GM12878 (cell line): ENCODE measurements at regions of chr2 and their contacts with region 1.

Region 1: DNA sequence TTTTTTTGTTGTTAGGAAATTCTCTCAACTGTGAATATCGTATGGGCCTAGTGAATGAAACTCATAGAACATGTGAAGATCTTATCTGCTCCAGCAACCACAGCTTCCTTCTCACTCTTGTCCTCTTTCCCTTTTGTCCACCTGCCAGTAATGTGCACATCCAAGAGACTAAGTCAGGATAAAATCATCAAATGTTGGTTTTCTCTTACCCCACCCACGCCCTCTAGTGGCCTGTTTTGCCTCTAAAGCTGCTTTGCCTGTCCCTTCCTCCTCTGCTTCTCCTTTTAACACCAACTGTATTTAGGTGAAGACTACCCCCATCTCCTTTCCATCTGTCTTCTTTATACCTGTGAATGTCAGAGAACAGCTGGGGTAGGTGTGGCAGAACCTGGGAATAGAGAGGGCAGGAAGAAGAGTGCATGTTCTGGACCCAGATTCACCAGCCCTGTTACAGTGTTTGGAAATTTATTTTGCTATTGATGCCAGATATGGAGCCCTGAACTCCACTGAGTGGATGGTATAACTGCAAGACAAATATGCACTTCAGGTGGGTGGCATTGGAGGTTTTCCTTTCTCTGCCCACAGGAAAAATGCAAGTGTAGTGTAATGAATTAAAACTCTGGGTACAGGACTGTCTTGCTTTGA is 8.4 kb upstream of the MGAT5 start:
- DNase-seq: no peak
- ATAC-seq: peak; percentile 65
- H3K4me3 ChIP-seq: no peak overlapping the region; the same call in 1 of the 2 replicates
- H3K27ac ChIP-seq: peak overlapping the region; percentile 54
- H3K4me1 ChIP-seq: peaks cover 66% of the 10 kb centered on the region
- H3K27me3 ChIP-seq: no peaks in the 10 kb centered on the region
- CTCF ChIP-seq: peak; percentile 78 to 86 (median 80)
- EP300 ChIP-seq: no peak
- POLR2A ChIP-seq: no peak
- RAD21 ChIP-seq: peak; percentile 75

Region 2: DNA sequence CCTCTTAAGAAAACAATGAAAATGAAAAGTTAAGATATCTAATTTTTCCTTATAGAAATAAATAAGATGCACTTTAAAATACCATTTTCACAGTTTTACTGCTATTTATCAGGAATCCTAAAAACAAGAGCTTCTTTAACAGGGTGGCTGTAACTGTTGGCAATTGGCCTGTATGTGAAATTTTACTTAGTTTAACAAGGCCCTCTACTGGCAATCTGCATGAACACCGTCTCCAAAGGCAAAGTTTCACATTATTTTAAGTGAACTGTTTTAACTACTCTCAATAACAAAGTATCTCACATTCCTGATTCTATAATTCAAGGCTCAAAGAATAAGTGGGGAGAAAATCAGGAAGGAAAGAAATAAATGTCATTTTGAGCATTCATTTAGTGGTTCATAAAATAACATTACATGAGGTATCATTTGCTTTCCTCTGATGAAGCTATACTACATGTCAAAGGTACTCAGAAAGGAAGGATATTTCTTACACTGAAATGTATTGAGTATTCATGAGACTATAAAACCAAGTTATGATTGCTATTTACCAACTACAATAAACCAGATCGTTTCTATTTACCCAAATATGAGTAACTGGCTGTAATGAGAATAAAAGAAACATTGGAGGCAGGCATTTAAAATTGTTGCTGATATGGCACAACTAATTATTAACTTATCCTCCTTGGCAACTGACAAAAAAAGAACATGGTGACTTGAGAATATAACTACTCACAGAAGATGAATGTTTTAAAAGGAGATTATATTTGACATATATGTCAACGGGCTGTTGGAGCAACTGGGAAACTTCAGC is 684.2 kb before region 1 on chr2:
- CTCF ChIA-PET with region 1: no interaction called
- POLR2A ChIA-PET with region 1: no interaction called
- RAD21 ChIA-PET with region 1: no interaction called
- SMC1A ChIA-PET with region 1: no interaction called
- in situ Hi-C with region 1: no loop called
- intact Hi-C with region 1: no loop called
- DNase-seq: no peak
- ATAC-seq: peak; percentile 80
- H3K4me3 ChIP-seq: no peak overlapping the region
- H3K27ac ChIP-seq: no peak overlapping the region
- H3K4me1 ChIP-seq: no peaks in the 10 kb centered on the region
- H3K27me3 ChIP-seq: no peaks in the 10 kb centered on the region; a peak in 1 of 4 replicates
- CTCF ChIP-seq: peak; percentile 58 to 65 (median 59); a peak in 5 of 6 replicates
- EP300 ChIP-seq: no peak
- POLR2A ChIP-seq: no peak
- RAD21 ChIP-seq: peak; percentile 50

Region 3: GRCh38 chr2:133886735-133887660 is 358.5 kb before region 1 on chr2:
- CTCF ChIA-PET with region 1: interaction called, 30 read pairs
- POLR2A ChIA-PET with region 1: no interaction called
- RAD21 ChIA-PET with region 1: interaction called, 7 read pairs
- SMC1A ChIA-PET with region 1: interaction called, 10 read pairs
- in situ Hi-C with region 1: no loop called
- intact Hi-C with region 1: loop called (anchors 10 kb)
- DNase-seq: peak; percentile 21
- ATAC-seq: peak; percentile 94
- H3K4me3 ChIP-seq: no peak overlapping the region
- H3K27ac ChIP-seq: no peak overlapping the region
- H3K4me1 ChIP-seq: no peaks in the 10 kb centered on the region
- H3K27me3 ChIP-seq: no peaks in the 10 kb centered on the region; a peak in 2 of 4 replicates
- CTCF ChIP-seq: peak; percentile 57 to 76 (median 70); a peak in 5 of 6 replicates
- EP300 ChIP-seq: no peak
- POLR2A ChIP-seq: no peak
- RAD21 ChIP-seq: peak; percentile 84

Region 4: DNA sequence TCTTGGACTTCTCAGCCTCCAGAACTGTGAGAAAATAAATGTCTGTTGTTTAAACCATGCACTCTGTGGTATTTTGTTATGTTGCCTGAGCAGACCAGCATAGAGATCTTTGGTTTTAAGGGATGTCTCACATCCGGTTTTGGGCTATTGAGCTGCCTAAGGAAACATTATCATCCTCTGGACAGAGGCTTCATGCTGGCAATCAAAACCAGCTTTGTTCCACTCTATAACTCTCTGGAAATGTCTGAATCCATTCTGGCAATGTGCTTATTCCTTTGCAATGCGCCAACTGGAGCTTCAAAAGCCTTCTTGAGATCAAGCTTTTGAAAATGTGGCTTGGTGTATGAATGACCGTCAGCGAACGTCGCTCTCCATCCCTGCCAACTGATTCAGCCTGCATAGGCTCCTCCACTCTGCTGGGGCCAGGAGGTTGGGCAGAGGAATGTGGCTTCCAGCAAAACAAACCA is 175.1 kb before region 1 on chr2:
- CTCF ChIA-PET with region 1: no interaction called
- POLR2A ChIA-PET with region 1: no interaction called
- RAD21 ChIA-PET with region 1: no interaction called
- SMC1A ChIA-PET with region 1: no interaction called
- in situ Hi-C with region 1: no loop called
- intact Hi-C with region 1: no loop called
- DNase-seq: no peak
- ATAC-seq: no peak
- H3K4me3 ChIP-seq: no peak overlapping the region
- H3K27ac ChIP-seq: no peak overlapping the region
- H3K4me1 ChIP-seq: no peaks in the 10 kb centered on the region
- H3K27me3 ChIP-seq: no peaks in the 10 kb centered on the region; a peak in 1 of 4 replicates
- CTCF ChIP-seq: no peak
- EP300 ChIP-seq: no peak
- POLR2A ChIP-seq: no peak
- RAD21 ChIP-seq: no peak

Region 5: GRCh38 chr2:134207564-134208209 is 37.8 kb before region 1 on chr2:
- CTCF ChIA-PET with region 1: interaction called, 49 read pairs
- POLR2A ChIA-PET with region 1: no interaction called
- RAD21 ChIA-PET with region 1: interaction called, 8 read pairs
- SMC1A ChIA-PET with region 1: interaction called, 12 read pairs
- in situ Hi-C with region 1: no loop called
- intact Hi-C with region 1: no loop called
- DNase-seq: no peak
- ATAC-seq: peak; percentile 99
- H3K4me3 ChIP-seq: no peak overlapping the region
- H3K27ac ChIP-seq: no peak overlapping the region
- H3K4me1 ChIP-seq: peaks cover 33% of the 10 kb centered on the region
- H3K27me3 ChIP-seq: no peaks in the 10 kb centered on the region
- CTCF ChIP-seq: peak; percentile 75 to 79 (median 78)
- EP300 ChIP-seq: no peak
- POLR2A ChIP-seq: no peak
- RAD21 ChIP-seq: peak; percentile 88

Region 6: DNA sequence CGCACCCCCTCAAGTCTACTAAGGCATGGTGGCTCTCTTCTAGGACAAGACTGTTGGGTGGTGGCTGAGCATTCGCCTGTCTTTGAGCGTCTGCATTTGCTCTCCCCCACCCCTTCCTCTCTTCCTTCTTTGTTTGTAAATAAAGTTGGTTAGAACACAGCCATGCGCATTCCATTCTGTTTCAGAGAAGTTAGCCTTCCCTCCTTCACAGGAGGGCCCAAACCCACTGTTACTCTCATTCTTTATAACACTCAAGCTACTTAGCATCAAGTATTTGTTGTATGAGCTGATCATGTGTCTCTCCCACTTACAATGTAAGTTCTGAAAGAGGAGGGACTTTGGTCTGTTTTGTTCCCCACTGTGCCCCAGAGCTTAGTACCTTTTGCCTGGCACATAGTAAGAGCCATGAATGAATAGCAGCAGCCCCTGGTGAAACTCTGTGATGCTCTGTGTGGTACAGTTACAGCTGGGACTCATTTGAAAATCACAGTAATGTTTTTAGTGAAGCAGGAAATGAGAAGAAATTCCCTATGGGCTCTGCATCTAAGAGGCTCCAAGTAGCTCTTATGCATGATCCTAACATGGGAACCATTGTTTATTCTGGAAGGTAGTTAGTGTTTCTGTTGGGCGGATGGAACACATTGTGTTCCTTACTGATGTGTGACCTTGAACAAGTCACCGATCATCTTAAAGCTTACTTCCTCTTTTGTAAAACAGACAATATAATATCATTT is 16.1 kb after region 1 on chr2:
- CTCF ChIA-PET with region 1: interaction called, 15 read pairs
- POLR2A ChIA-PET with region 1: interaction called, 6 read pairs
- RAD21 ChIA-PET with region 1: interaction called, 17 read pairs
- SMC1A ChIA-PET with region 1: interaction called, 19 read pairs
- in situ Hi-C with region 1: no loop called
- intact Hi-C with region 1: no loop called
- DNase-seq: no peak
- ATAC-seq: peak; percentile 78
- H3K4me3 ChIP-seq: no peak overlapping the region
- H3K27ac ChIP-seq: peak overlapping the region; percentile 74
- H3K4me1 ChIP-seq: peaks cover 68% of the 10 kb centered on the region
- H3K27me3 ChIP-seq: no peaks in the 10 kb centered on the region
- CTCF ChIP-seq: no peak
- EP300 ChIP-seq: no peak
- POLR2A ChIP-seq: no peak
- RAD21 ChIP-seq: no peak

Region 7: DNA sequence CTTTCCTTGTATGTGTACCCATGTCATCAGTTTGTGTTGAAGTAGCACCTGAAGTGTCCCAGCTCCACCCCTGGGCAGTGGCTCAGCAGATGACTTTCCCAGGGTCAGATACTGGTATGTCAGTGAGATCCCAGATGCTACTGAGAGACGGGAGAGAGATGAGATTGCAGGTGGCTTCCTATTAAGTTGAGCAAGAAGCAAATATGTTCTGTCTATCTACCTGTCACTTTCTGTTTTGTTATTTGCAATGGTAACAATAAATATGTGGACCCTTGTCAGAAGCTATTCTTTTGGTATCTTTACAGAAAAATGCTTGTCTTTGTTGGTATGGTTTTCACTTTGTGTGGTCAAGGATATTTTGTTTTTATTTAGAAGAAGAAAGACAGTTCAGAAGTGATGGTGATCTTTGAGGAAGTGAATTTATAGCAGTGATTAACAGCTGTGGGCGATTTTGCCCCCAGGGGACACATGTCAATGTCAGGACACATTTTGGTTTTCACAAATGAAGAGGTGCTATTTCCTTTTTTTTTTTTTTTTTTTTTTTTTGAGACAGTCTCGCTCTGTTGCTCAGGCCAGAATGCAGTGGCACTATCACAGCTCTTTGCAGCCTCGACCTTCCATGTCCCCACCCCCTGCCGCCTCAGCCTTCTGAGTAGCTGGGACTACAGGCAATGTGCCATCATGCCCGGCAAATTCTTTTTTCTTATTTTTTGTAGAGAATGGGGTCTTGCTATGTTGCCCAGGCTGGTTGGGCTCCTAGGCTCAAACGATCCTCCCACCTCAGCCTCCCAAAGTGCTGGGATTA is 29.8 kb after region 1 on chr2:
- CTCF ChIA-PET with region 1: interaction called, 29 read pairs
- POLR2A ChIA-PET with region 1: interaction called, 9 read pairs
- RAD21 ChIA-PET with region 1: interaction called, 4 read pairs
- SMC1A ChIA-PET with region 1: interaction called, 33 read pairs
- in situ Hi-C with region 1: no loop called
- intact Hi-C with region 1: no loop called
- DNase-seq: peak; percentile 95
- ATAC-seq: peak; percentile 89
- H3K4me3 ChIP-seq: peak overlapping the region; percentile 31; the same call in 1 of the 2 replicates
- H3K27ac ChIP-seq: peak overlapping the region; percentile 88
- H3K4me1 ChIP-seq: peaks cover 91% of the 10 kb centered on the region
- H3K27me3 ChIP-seq: no peaks in the 10 kb centered on the region
- CTCF ChIP-seq: no peak
- EP300 ChIP-seq: peak; percentile 94 to 97
- POLR2A ChIP-seq: no peak
- RAD21 ChIP-seq: no peak; the same call in 1 of the 2 replicates

Region 8: DNA sequence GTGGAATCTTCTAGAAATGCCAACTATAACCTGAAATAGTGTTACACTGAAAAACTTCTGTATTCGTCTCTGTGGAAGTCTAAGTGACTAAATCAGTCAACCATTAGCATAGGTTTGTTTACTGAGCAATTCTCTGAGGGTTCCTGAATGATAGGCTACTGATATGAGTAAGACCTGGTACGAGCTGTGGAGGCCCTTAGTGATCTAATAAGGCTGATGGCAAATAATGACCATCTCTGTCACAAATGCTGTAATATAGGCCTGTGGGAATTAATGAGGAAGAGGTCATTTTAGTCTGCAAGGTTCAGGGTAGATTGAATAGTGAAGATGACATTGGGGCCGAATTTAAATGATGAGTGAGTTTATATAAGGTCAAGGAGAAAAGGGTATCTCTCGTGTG is 90.9 kb after region 1 on chr2:
- CTCF ChIA-PET with region 1: interaction called, 7 read pairs
- POLR2A ChIA-PET with region 1: no interaction called
- RAD21 ChIA-PET with region 1: no interaction called
- SMC1A ChIA-PET with region 1: no interaction called
- in situ Hi-C with region 1: no loop called
- intact Hi-C with region 1: loop called (anchors 5 kb)
- DNase-seq: peak; percentile 53
- ATAC-seq: peak; percentile 96
- H3K4me3 ChIP-seq: no peak overlapping the region
- H3K27ac ChIP-seq: peak overlapping the region; percentile 48
- H3K4me1 ChIP-seq: peaks cover 25% of the 10 kb centered on the region
- H3K27me3 ChIP-seq: no peaks in the 10 kb centered on the region
- CTCF ChIP-seq: no peak
- EP300 ChIP-seq: peak in 1 of 2 experiments; percentile 67; a peak in 1 of 4 replicates
- POLR2A ChIP-seq: no peak
- RAD21 ChIP-seq: no peak